HepG2 (cell line): ENCODE measurements at regions of chr7 and their contacts with region 1.

Region 1: GRCh38 chr7:94972296-94972695 is 64.9 kb downstream of the PPP1R9A start:
- DNase-seq: peak; percentile 93
- ATAC-seq: peak; percentile 58
- H3K4me3 ChIP-seq: no peak overlapping the region
- H3K27ac ChIP-seq: peak overlapping the region; percentile 46
- H3K4me1 ChIP-seq: peaks cover 72% of the 10 kb centered on the region
- H3K27me3 ChIP-seq: no peaks in the 10 kb centered on the region
- CTCF ChIP-seq: no peak
- EP300 ChIP-seq: peak in 1 of 2 experiments; percentile 81; a peak in 2 of 4 replicates
- POLR2A ChIP-seq: no peak
- RAD21 ChIP-seq: no peak

Region 2: GRCh38 chr7:94561841-94562514 is 410.3 kb before region 1 on chr7:
- CTCF ChIA-PET with region 1: no interaction called
- POLR2A ChIA-PET with region 1: no interaction called
- in situ Hi-C with region 1: no loop called
- intact Hi-C with region 1: loop called (anchors 5 kb)
- DNase-seq: peak; percentile 97
- ATAC-seq: peak; percentile 95
- H3K4me3 ChIP-seq: no peak overlapping the region
- H3K27ac ChIP-seq: peak overlapping the region; percentile 73
- H3K4me1 ChIP-seq: peaks cover 41% of the 10 kb centered on the region
- H3K27me3 ChIP-seq: no peaks in the 10 kb centered on the region
- CTCF ChIP-seq: no peak
- EP300 ChIP-seq: peak; percentile 45 to 97; a peak in 2 of 4 replicates
- POLR2A ChIP-seq: no peak
- RAD21 ChIP-seq: no peak